Activated T-helper 2 cell treated with anti-CD3 and anti-CD28 coated beads, Interferon-gamma antibody, Interleukin-2, Interleukin-4, amounts not matched to agents 10 μg/mL and 5 μg/mL and 100 μg/mL, durations not matched to agents 14 hours and 24 hours and 36 hours (primary cell): ENCODE measurements at regions of chr14 and their contacts with region 1.

Region 1: GRCh38 chr14:50003213-50004031 is 110.5 kb downstream of the ARF6 start:
- DNase-seq: peak; percentile 76
- H3K4me3 Mint-ChIP-seq: peak overlapping the region; percentile 83
- H3K27ac Mint-ChIP-seq: peak overlapping the region; percentile 98
- H3K4me1 Mint-ChIP-seq: peaks cover 34% of the 10 kb centered on the region
- H3K27me3 Mint-ChIP-seq: no peaks in the 10 kb centered on the region

Region 2: DNA sequence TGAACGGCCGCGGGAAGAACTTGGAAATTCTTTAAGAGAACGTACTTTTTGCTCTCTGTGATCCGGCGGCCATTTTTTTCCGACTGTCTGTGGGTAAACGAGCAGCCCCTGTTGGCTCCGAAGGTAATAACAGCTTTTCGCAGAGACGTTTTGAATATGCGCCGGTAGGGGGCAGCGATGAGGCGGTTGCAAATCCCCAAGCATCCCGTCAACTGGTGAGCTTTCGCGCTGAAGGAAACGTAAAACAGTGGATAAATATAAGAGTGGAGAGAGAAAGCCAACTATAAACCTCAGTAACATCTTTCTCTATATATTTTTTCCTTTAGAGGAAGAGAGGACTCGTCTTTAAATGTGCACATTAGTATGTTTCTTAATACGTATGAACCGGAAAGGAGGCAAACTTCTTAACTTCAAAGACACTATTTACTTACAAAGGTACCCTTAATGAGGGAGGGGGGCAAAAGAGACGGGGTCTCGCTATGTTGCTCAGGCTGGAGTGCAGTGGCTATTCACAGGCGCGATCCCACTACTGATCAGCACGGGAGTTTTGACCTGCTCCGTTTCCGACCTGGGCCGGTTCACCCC is 141.2 kb before region 1 on chr14:
- intact Hi-C with region 1: loop called (anchors 2 kb)
- DNase-seq: peak; percentile 83
- H3K4me3 Mint-ChIP-seq: no peak overlapping the region
- H3K27ac Mint-ChIP-seq: no peak overlapping the region
- H3K4me1 Mint-ChIP-seq: peaks cover 16% of the 10 kb centered on the region
- H3K27me3 Mint-ChIP-seq: no peaks in the 10 kb centered on the region

Region 3: DNA sequence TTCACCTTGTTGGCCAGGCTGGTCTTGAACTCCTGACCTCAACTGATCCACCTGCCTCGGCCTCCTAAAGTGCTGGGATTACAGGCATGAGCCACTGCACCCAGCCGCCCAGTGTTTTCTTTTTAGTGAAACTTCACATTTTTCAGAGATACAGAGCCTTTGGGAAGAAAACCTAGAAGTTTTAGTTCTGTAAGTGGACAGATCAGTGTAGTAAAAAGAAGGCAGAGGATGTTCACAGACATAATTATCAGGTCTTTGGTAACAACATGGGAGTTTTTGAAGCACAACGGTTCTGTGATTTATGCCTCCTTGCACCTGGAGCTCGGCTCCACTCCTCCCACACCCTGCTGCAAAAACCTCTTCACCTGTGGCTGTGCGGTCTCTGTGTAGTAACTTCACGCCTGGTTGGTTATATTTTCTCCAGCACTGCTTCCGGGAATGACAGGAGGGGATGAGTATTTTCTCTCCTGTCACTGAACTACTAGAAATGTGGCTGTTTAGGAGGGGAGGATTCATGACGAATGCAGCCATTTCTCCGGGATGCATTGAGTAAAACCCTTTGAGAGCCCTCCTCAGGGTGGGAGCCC is 43.5 kb before region 1 on chr14:
- intact Hi-C with region 1: loop called (anchors 5 kb)
- DNase-seq: no peak
- H3K4me3 Mint-ChIP-seq: no peak overlapping the region
- H3K27ac Mint-ChIP-seq: peak overlapping the region; percentile 38
- H3K4me1 Mint-ChIP-seq: peaks cover 42% of the 10 kb centered on the region
- H3K27me3 Mint-ChIP-seq: no peaks in the 10 kb centered on the region

Region 4: DNA sequence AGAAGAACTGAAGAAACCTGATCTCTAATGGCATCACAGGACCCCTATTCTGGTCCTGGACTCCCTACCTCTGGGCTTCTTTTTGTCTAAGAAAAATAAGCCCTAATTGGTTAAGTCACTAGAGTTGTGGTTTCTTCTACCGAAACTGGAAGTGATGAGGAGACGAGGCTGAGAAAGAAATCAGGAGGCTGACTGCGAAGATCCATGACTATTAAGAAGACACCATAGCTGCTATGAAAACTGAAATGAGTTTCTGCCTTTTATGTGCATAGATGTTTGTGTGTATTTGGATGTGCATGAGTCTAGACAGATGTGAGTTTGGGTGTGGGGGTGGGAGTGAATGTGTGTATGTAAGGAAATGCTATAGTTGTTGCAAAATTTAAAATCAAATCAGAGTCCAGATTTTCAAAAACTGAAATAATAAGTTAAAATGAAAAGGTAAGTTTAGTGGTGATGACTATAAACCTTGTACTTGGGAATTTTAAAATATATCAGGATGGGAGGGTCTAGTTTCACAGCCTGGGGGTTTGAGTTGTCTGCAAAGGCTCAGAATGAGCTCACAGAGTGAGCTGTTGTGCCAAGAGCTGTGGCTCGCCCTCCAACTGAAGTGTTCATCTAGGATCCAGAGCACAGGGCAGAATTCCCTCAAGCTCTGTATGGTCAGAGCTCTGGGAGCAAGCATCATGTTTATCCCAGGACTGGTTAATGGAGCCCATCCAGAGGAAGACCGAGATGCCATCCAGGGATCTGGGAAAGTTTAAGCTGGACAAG is 18.0 kb after region 1 on chr14:
- intact Hi-C with region 1: loop called (anchors 2 kb)
- DNase-seq: no peak
- H3K4me3 Mint-ChIP-seq: no peak overlapping the region
- H3K27ac Mint-ChIP-seq: peak overlapping the region; percentile 51
- H3K4me1 Mint-ChIP-seq: peaks cover 27% of the 10 kb centered on the region
- H3K27me3 Mint-ChIP-seq: no peaks in the 10 kb centered on the region

Region 5: GRCh38 chr14:50060871-50061663 is 57.6 kb after region 1 on chr14:
- intact Hi-C with region 1: loop called (anchors 1 kb)
- DNase-seq: no peak
- H3K4me3 Mint-ChIP-seq: peak overlapping the region; percentile 97
- H3K27ac Mint-ChIP-seq: peak overlapping the region; percentile 100
- H3K4me1 Mint-ChIP-seq: peaks cover 83% of the 10 kb centered on the region
- H3K27me3 Mint-ChIP-seq: no peaks in the 10 kb centered on the region

Region 6: DNA sequence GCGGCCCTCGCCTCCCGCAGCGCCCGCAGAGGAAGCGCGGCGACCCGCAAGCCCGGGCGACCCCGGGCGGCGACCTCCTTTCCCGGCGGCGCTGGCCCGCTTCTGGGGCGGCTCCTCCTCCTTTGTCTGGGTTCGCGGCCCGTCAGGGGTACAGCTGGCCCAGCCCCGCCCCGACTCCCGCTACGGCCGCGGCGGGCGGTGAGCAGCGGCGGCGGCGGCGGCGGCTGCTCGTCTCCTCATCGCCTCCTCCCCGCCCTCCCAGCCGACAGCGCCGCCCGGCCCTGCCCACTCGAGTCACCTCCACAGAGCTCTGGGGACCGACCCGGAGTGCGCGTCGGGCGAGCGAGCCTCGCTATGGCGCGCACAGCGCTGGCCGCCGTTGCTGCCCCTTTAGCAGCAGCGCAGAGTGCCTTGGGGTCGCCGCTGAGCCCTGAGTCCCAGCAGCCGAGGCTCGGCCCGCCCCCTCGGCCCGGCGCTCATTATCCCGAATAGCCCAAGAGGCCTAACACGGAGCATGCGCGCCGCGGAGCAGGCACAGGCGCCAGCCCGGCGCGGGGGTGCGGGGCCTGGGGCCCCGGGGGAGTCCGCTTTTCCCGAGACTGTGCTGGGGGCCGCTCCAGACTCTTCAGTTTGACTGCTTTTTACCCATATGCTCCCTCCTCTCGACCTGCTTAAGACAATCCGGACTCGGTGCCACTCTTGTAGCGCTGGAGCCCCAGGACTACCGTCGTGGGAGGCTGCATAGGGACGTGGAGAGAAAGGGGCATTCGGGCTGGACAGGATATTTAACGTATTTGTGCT is 228.3 kb after region 1 on chr14 and contains the start of gene SOS2:
- intact Hi-C with region 1: loop called (anchors 1 kb)
- DNase-seq: peak; percentile 80
- H3K4me3 Mint-ChIP-seq: peak within 1 kb of the TSS; percentile 92
- H3K27ac Mint-ChIP-seq: peak within 1 kb of the TSS; percentile 88
- H3K4me1 Mint-ChIP-seq: peaks cover 36% of the 10 kb centered on the region
- H3K27me3 Mint-ChIP-seq: peaks cover 4% of the 10 kb centered on the region
- total RNA-seq, gene SOS2: 17.0 and 20.7 TPM in 2 replicates

Region 7: DNA sequence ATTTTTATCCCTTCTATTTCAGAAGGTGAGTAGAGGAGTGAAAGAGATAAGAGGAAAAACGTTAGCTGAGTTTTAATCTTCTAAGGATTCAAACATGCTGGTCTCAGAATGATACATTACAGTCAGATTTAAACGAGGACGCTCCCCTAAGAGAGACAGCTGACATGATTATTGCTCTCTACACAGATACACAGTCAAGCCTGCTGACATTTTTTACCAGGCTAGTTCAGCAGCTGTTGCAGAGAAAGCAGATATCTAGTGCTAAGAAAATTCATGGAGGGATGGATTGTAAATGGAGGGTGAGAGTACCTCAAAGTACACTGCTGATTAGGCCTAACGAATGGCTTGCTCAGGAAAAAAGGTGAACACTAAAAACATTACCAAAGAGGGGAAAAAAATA is 259.9 kb after region 1 on chr14:
- intact Hi-C with region 1: no loop called
- DNase-seq: no peak
- H3K4me3 Mint-ChIP-seq: no peak overlapping the region
- H3K27ac Mint-ChIP-seq: no peak overlapping the region
- H3K4me1 Mint-ChIP-seq: no peaks in the 10 kb centered on the region
- H3K27me3 Mint-ChIP-seq: no peaks in the 10 kb centered on the region